Activated CD4-positive, alpha-beta memory T cell treated with anti-CD3 and anti-CD28 coated beads for 36 hours (primary cell): ENCODE measurements at regions of chr10 and their contacts with region 1.

Region 1: GRCh38 chr10:12594448-12594944 is 245.1 kb downstream of the CAMK1D start:
- DNase-seq: peak; percentile 75
- H3K4me3 Mint-ChIP-seq: peak overlapping the region; percentile 36
- H3K27ac Mint-ChIP-seq: peak overlapping the region; percentile 94
- H3K4me1 Mint-ChIP-seq: peaks cover 70% of the 10 kb centered on the region
- H3K27me3 Mint-ChIP-seq: no peaks in the 10 kb centered on the region

Region 2: GRCh38 chr10:12605580-12606405 is 11.3 kb after region 1 on chr10:
- CTCF ChIA-PET with region 1: interaction called, 3 read pairs
- POLR2A ChIA-PET with region 1: interaction called, 4 read pairs
- intact Hi-C with region 1: loop called (anchors 1 kb)
- DNase-seq: peak; percentile 64
- H3K4me3 Mint-ChIP-seq: peak overlapping the region; percentile 80
- H3K27ac Mint-ChIP-seq: peak overlapping the region; percentile 96
- H3K4me1 Mint-ChIP-seq: peaks cover 17% of the 10 kb centered on the region
- H3K27me3 Mint-ChIP-seq: no peaks in the 10 kb centered on the region

Region 3: GRCh38 chr10:12617191-12618175 is 23.0 kb after region 1 on chr10:
- CTCF ChIA-PET with region 1: no interaction called
- POLR2A ChIA-PET with region 1: no interaction called
- intact Hi-C with region 1: no loop called
- DNase-seq: no peak
- H3K4me3 Mint-ChIP-seq: no peak overlapping the region
- H3K27ac Mint-ChIP-seq: no peak overlapping the region
- H3K4me1 Mint-ChIP-seq: peaks cover 8% of the 10 kb centered on the region
- H3K27me3 Mint-ChIP-seq: no peaks in the 10 kb centered on the region

Region 4: DNA sequence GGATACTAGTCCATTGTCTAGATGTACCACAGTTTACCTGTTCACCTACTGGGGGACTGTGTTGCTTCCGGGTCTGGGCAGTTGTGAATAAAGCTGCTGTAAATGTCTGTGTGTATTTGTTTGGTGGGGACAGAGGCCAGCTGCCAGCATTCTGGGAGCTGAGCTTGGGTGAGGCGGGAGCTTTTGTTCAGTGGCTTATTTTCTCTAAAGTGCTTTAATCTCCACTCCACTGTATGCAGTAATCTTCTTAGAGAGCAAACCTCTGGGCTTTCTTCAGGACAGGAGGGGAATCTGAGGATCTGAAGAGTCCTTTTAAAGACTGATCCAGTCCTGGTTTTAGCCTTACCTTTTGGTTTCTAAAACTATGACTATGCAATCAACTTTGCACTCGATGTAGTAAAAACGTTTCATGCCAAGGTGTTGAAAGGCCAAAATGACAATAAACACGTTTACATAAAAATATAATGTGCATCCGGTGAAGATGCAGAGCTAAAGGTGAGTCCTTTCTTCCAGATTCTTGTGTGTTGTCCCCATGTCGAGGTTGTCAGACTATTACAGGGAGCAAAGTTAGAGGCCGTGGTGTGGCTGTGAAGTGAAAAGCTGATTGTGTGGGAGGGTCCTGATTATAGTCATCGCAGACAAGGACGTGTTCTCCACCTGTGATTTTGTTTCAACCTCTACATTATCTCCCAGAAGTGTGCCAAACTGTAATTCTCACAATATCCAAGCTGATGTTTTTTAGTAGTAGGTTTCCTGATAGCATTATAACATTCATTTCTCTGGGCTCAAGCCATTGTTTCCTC is 34.7 kb after region 1 on chr10:
- CTCF ChIA-PET with region 1: no interaction called
- POLR2A ChIA-PET with region 1: no interaction called
- intact Hi-C with region 1: loop called (anchors 5 kb)
- DNase-seq: peak; percentile 53
- H3K4me3 Mint-ChIP-seq: peak overlapping the region; percentile 6
- H3K27ac Mint-ChIP-seq: peak overlapping the region; percentile 2
- H3K4me1 Mint-ChIP-seq: peaks cover 24% of the 10 kb centered on the region
- H3K27me3 Mint-ChIP-seq: no peaks in the 10 kb centered on the region